ENCODE measurements at regions of chr3 and their contacts with region 1.

Region 1: DNA sequence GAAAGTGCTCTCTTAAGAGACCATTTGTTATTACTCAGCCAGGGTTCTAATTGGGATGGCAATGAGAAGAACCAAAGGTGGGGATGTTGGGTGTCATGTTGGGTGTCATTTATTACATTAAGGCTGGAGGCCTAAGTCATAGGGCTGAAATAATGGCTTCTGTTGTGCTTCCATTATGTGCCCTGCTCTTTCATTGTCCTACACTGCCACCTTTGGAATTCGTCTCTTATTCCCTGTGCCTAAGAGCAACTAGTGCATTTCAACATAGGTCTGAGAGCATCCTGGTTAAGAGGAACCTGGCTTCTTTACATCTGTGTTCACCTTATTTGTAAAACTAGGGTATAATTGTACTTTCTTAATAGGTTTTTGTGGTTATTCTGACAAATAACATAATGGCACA is 32.2 kb downstream of the RIOX2 start:
- DNase-seq: no peak
- H3K4me3 ChIP-seq: no peak overlapping the region
- H3K27ac ChIP-seq: no peak overlapping the region
- H3K4me1 ChIP-seq: no peaks in the 10 kb centered on the region
- H3K27me3 ChIP-seq: no peaks in the 10 kb centered on the region
- CTCF ChIP-seq: no peak

Region 2: DNA sequence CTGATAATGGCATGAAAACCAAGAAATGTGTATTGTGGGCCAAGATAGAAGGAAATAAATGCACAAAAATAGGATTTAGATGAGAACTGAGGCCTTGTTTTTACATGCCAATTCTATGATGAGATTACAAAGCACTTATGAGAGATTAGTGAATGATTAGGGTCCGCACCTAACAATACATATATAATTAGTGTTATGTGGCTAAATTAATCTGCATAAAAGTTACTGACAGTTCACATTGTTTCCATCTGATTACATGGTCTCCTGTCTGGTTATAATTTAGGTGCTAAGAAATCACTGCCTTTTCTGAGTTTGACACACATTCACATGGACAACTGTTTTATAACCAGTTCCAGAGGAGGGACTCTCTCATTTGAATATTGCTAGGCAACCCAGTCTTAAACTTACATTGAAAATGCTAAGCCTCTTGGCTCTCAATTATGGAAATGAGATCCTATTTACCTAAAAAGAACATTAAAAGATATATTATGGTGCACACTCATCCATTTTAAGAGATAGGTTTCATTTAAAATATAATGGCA is 292.5 kb before region 1 on chr3:
- intact Hi-C with region 1: no loop called
- DNase-seq: no peak
- H3K4me3 ChIP-seq: no peak overlapping the region
- H3K27ac ChIP-seq: no peak overlapping the region
- H3K4me1 ChIP-seq: no peaks in the 10 kb centered on the region
- H3K27me3 ChIP-seq: no peaks in the 10 kb centered on the region
- CTCF ChIP-seq: no peak

Region 3: GRCh38 chr3:97871801-97872524 is 68.1 kb before region 1 on chr3:
- intact Hi-C with region 1: loop called (anchors 10 kb)
- DNase-seq: no peak
- H3K4me3 ChIP-seq: no peak overlapping the region
- H3K27ac ChIP-seq: no peak overlapping the region
- H3K4me1 ChIP-seq: no peaks in the 10 kb centered on the region
- H3K27me3 ChIP-seq: no peaks in the 10 kb centered on the region
- CTCF ChIP-seq: no peak

Region 4: DNA sequence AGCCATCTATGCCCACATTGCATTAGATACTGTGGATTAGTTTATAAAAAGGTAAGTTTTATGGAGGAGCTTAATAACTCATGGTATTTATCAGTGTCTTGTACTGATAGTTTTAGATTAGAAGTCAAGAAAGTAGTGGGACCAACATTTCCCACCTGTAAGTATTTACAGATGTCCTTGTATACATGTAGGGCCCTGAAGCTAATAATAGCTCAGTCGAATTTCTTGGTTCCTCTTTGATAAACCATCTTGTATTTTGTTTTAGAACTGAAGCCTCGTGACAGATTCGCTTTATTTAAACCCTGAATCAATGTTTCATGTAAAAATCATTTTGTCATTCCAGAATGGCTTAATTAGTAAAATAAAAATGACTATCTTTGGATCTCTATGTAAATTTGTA is 44.8 kb before region 1 on chr3:
- intact Hi-C with region 1: no loop called
- DNase-seq: no peak
- H3K4me3 ChIP-seq: no peak overlapping the region
- H3K27ac ChIP-seq: no peak overlapping the region
- H3K4me1 ChIP-seq: no peaks in the 10 kb centered on the region
- H3K27me3 ChIP-seq: no peaks in the 10 kb centered on the region
- CTCF ChIP-seq: no peak

Region 5: GRCh38 chr3:97981886-97982285 is 41.9 kb after region 1 on chr3:
- intact Hi-C with region 1: no loop called
- DNase-seq: no peak
- H3K4me3 ChIP-seq: no peak overlapping the region
- H3K27ac ChIP-seq: no peak overlapping the region
- H3K4me1 ChIP-seq: no peaks in the 10 kb centered on the region
- H3K27me3 ChIP-seq: no peaks in the 10 kb centered on the region
- CTCF ChIP-seq: no peak

Region 6: GRCh38 chr3:98972155-98972554 is 1032.1 kb after region 1 on chr3:
- intact Hi-C with region 1: no loop called
- DNase-seq: no peak
- H3K4me3 ChIP-seq: no peak overlapping the region
- H3K27ac ChIP-seq: no peak overlapping the region
- H3K4me1 ChIP-seq: no peaks in the 10 kb centered on the region
- H3K27me3 ChIP-seq: no peaks in the 10 kb centered on the region
- CTCF ChIP-seq: no peak